Motor neuron (in vitro differentiated cells): ENCODE measurements at regions of chr2 and their contacts with region 1.

Region 1: GRCh38 chr2:112958428-112959108 is 19.2 kb upstream of the IL36G start:
- ATAC-seq: peak; percentile 71 to 94 (median 80)
- H3K4me3 ChIP-seq: no peak overlapping the region
- H3K27ac ChIP-seq: no peak overlapping the region
- H3K4me1 ChIP-seq: peaks cover 0 to 7% of the 10 kb centered on the region in 2 donors

Region 2: DNA sequence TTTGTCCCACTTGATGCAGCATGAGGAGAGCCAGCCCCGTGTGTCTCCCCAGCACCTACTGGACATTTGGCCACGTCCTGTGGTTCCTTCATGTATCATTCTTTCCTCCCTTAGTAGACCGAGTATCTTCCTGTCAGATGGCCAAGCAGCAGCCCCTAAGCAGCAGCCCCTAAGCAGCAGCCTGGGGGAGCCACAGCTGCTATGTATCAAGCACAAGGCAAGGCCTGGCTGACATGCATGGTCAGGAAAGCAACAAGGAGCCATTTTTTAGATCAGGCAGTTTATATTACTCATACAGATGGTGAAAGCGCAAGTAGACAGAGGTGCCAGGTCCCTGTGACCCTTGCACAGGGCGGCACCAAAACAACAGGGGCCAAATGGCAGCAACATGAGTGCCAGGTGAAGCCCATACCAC is 352.1 kb before region 1 on chr2:
- in situ Hi-C with region 1: loop called in 2 of 9 experiments (anchors 10 to 25 kb)
- ATAC-seq: no peak
- H3K4me3 ChIP-seq: no peak overlapping the region
- H3K27ac ChIP-seq: no peak overlapping the region
- H3K4me1 ChIP-seq: no peaks in the 10 kb centered on the region

Region 3: DNA sequence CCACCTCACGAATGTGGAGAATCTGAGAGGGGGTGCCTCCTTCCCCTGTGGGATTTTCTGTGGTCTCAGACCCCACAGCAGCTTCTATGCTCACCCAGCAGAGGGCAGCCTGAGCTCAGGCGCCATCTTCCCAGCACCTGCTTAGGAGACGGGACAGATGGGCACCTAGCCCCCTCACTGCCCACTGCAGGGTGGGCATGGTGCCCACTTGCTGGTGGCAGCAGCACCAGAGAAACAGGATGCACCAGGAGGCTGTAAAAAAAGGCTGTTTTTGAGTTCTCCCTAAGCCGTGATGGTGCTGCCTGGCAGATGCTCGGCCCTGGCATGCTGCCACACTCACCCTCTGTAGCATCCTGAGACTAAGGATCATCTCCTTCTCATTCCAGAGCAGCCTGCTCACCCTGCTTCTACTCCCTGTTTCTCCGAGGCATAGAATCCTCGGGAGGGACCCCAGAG is 331.9 kb before region 1 on chr2:
- in situ Hi-C with region 1: loop called in 1 of 9 experiments (anchors 25 kb)
- ATAC-seq: peak; percentile 3 to 84 (median 69)
- H3K4me3 ChIP-seq: no peak overlapping the region
- H3K27ac ChIP-seq: no peak overlapping the region
- H3K4me1 ChIP-seq: peaks cover 3 to 6% of the 10 kb centered on the region in 2 donors

Region 4: DNA sequence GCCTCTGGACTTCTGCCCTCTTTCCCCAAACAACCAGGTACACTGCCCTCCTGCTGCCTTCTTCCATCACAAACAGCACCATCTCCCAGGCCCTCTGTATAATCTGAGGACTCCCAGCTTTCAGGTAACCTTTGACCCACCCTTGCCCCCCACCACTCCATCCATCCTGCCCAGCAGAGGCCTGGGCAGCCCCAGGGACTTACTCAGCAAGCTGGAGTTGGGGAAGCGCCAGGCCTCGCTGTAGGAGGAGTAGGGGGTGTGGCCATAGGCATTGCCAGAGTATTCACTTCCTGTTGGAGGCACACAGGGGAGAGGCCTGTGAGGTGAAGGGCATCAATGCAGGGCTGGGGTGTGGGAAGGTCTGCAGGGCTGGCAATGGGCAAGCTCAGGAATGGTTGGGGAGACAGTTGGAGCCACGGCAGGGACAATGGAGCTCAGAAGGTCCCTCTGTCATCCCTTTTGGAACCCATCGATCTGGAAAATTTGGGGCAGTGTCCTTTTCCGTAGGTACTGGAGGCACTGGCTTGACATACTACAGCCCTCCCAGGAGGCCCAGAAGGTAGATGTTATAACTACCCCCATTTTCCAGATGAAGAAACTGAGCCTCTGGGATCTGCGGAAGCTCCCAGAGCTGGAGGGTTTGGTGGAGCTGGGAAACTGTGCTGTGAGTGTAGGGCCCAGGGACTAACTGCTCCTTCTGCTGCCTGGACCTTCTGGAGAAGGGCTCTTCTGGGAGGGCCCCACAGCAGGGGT is 261.5 kb after region 1 on chr2:
- in situ Hi-C with region 1: no loop called
- ATAC-seq: peak in 7 of 8 experiments; percentile 12 to 34 (median 29)
- H3K4me3 ChIP-seq: no peak overlapping the region
- H3K27ac ChIP-seq: peak overlapping the region in 1 of 2 donors; percentile 13
- H3K4me1 ChIP-seq: peaks cover 29 to 41% of the 10 kb centered on the region in 2 donors